T-cell (primary cell): ENCODE measurements at regions of chr12 and their contacts with region 1.

Region 1: GRCh38 chr12:104108755-104109445 is 29.1 kb downstream of the NFYB start:
- DNase-seq: peak; percentile 66 to 91 (median 83)
- ATAC-seq: peak; percentile 97 to 99 (median 98)
- H3K4me3 ChIP-seq: no peak overlapping the region
- H3K4me3 Mint-ChIP-seq: peak overlapping the region in 2 of 3 donors; percentile 19 to 31
- H3K27ac ChIP-seq: no peak overlapping the region
- H3K27ac Mint-ChIP-seq: no peak overlapping the region
- H3K4me1 ChIP-seq: peaks cover 0 to 6% of the 10 kb centered on the region in 2 experiments
- H3K4me1 Mint-ChIP-seq: peaks cover 10 to 12% (median 10%) of the 10 kb centered on the region in 3 donors
- H3K27me3 ChIP-seq: no peaks in the 10 kb centered on the region
- H3K27me3 Mint-ChIP-seq: no peaks in the 10 kb centered on the region

Region 2: GRCh38 chr12:103877934-103878510 is 230.9 kb before region 1 on chr12:
- CTCF ChIA-PET with region 1: interaction called, 17 to 19 read pairs
- POLR2A ChIA-PET with region 1: interaction called in 1 of 2 experiments, 3 read pairs
- DNase-seq: peak in 31 of 35 experiments; percentile 4 to 80 (median 35)
- ATAC-seq: peak; percentile 73 to 84 (median 79)
- H3K4me3 ChIP-seq: no peak overlapping the region
- H3K4me3 Mint-ChIP-seq: no peak overlapping the region
- H3K27ac ChIP-seq: no peak overlapping the region
- H3K27ac Mint-ChIP-seq: no peak overlapping the region
- H3K4me1 ChIP-seq: peaks cover 4 to 9% of the 10 kb centered on the region in 2 experiments
- H3K4me1 Mint-ChIP-seq: peaks cover 4 to 21% (median 14%) of the 10 kb centered on the region in 3 donors
- H3K27me3 ChIP-seq: no peaks in the 10 kb centered on the region
- H3K27me3 Mint-ChIP-seq: no peaks in the 10 kb centered on the region

Region 3: GRCh38 chr12:103897316-103897715 is 211.6 kb before region 1 on chr12:
- CTCF ChIA-PET with region 1: no interaction called
- POLR2A ChIA-PET with region 1: no interaction called
- DNase-seq: no peak
- ATAC-seq: no peak
- H3K4me3 ChIP-seq: no peak overlapping the region
- H3K4me3 Mint-ChIP-seq: no peak overlapping the region
- H3K27ac ChIP-seq: no peak overlapping the region
- H3K27ac Mint-ChIP-seq: no peak overlapping the region
- H3K4me1 ChIP-seq: peaks cover 7 to 19% of the 10 kb centered on the region in 2 experiments
- H3K4me1 Mint-ChIP-seq: peaks cover 24 to 33% (median 28%) of the 10 kb centered on the region in 3 donors
- H3K27me3 ChIP-seq: no peaks in the 10 kb centered on the region
- H3K27me3 Mint-ChIP-seq: no peaks in the 10 kb centered on the region

Region 4: GRCh38 chr12:104057771-104058197 is 51.1 kb before region 1 on chr12:
- CTCF ChIA-PET with region 1: interaction called, 13 to 28 read pairs
- POLR2A ChIA-PET with region 1: no interaction called
- DNase-seq: peak in 1 of 35 experiments; percentile 45
- ATAC-seq: peak; percentile 40 to 60 (median 54)
- H3K4me3 ChIP-seq: no peak overlapping the region
- H3K4me3 Mint-ChIP-seq: no peak overlapping the region
- H3K27ac ChIP-seq: no peak overlapping the region
- H3K27ac Mint-ChIP-seq: no peak overlapping the region
- H3K4me1 ChIP-seq: no peaks in the 10 kb centered on the region
- H3K4me1 Mint-ChIP-seq: no peaks in the 10 kb centered on the region
- H3K27me3 ChIP-seq: peaks cover 0 to 26% of the 10 kb centered on the region in 2 experiments
- H3K27me3 Mint-ChIP-seq: peaks cover 35 to 39% of the 10 kb centered on the region in 2 donors

Region 5: DNA sequence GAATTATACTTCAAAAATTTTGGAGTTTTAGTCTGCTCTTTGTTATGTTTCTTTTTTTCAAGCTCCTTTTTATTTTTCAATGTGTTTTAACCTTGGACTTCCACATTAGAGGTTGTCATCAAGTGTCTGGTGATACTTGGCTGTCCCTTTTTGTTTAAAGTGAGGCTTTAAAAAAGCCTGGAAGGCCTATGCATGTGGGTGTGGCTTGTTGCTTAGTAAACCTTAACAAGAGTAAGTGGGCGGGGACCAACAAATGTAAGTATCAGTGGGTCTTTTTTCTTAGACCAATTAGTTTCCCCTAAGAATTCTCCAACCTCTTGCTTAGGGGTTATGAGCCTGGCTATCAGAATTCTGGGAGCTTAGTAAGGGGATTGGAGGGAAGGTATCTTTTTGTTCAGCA is 18.2 kb before region 1 on chr12:
- CTCF ChIA-PET with region 1: interaction called, 5 to 11 read pairs
- POLR2A ChIA-PET with region 1: no interaction called
- DNase-seq: no peak
- ATAC-seq: no peak
- H3K4me3 ChIP-seq: no peak overlapping the region
- H3K4me3 Mint-ChIP-seq: no peak overlapping the region
- H3K27ac ChIP-seq: no peak overlapping the region
- H3K27ac Mint-ChIP-seq: no peak overlapping the region
- H3K4me1 ChIP-seq: no peaks in the 10 kb centered on the region
- H3K4me1 Mint-ChIP-seq: peaks cover 0 to 5% (median 0%) of the 10 kb centered on the region in 3 donors
- H3K27me3 ChIP-seq: no peaks in the 10 kb centered on the region
- H3K27me3 Mint-ChIP-seq: no peaks in the 10 kb centered on the region

Region 6: GRCh38 chr12:104189915-104190555 is 81.1 kb after region 1 on chr12:
- CTCF ChIA-PET with region 1: no interaction called
- POLR2A ChIA-PET with region 1: no interaction called
- DNase-seq: no peak
- ATAC-seq: no peak
- H3K4me3 ChIP-seq: no peak overlapping the region
- H3K4me3 Mint-ChIP-seq: no peak overlapping the region
- H3K27ac ChIP-seq: no peak overlapping the region
- H3K27ac Mint-ChIP-seq: no peak overlapping the region
- H3K4me1 ChIP-seq: no peaks in the 10 kb centered on the region
- H3K4me1 Mint-ChIP-seq: no peaks in the 10 kb centered on the region
- H3K27me3 ChIP-seq: no peaks in the 10 kb centered on the region
- H3K27me3 Mint-ChIP-seq: no peaks in the 10 kb centered on the region

Region 7: DNA sequence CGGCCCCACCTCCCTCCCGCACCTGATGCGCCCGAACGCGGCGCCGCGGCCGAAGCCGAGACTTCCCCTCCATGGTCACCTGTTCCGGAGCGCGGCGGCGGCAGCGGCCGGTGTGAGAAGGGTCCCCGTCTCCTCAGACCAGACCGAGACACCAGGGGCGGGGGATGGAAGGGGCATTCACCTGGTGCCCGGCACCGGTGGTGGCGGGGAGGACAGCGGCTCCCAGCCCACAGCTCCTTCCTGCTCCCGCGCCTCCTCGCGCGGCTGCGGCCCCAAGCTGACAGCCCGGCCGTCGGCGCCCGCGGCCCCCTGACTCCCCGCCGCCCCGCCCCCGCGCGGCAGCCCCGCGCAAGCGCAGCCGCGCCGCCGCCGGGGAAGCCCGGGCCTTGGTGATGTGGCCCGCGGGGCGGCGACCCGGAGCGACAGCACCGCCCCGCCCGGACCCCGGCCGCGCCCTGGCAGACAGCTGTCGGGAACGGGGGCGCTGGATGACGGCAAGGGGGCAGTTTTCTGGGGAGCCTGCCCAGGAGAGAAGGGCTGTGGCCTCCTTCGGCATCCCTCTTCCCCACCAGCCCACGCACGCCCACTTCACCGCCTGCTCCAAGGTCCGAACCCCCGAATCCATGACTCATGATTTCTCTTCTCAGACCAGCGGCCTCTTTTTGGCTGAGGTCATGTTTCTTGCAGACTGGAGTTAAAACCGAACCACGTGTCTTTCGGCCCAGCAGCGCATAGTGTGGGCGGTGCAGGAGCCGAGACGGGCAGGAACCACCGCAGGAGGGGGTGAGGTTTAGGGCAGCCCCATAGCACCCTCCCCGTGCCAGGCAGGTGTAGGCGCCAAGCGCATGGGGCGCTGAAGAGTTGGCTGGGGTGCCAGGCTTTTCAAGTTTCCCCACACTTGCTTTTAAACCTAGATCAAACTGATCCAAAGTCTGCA is 849.4 kb after region 1 on chr12 and contains the start of gene SLC41A2:
- CTCF ChIA-PET with region 1: no interaction called
- POLR2A ChIA-PET with region 1: interaction called in 1 of 2 experiments, 11 read pairs
- DNase-seq: peak; percentile 52 to 86 (median 73)
- ATAC-seq: peak; percentile 88 to 92 (median 90)
- H3K4me3 ChIP-seq: peak within 1 kb of the TSS; percentile 86 to 95
- H3K4me3 Mint-ChIP-seq: peak within 1 kb of the TSS; percentile 88 to 95 (median 90)
- H3K27ac ChIP-seq: peak within 1 kb of the TSS; percentile 65
- H3K27ac Mint-ChIP-seq: peak within 1 kb of the TSS; percentile 76 to 83
- H3K4me1 ChIP-seq: peaks cover 7 to 10% of the 10 kb centered on the region in 2 experiments
- H3K4me1 Mint-ChIP-seq: peaks cover 17 to 22% (median 21%) of the 10 kb centered on the region in 3 donors
- H3K27me3 ChIP-seq: peaks cover 0 to 6% of the 10 kb centered on the region in 2 experiments
- H3K27me3 Mint-ChIP-seq: peaks cover 6% of the 10 kb centered on the region in 2 donors
- total RNA-seq, gene SLC41A2: 2.4 to 3.8 (median 3.4) TPM